PC-3 (cell line): ENCODE measurements at regions of chr20 and their contacts with region 1.

Region 1: GRCh38 chr20:32357869-32358631 is at the start of gene ASXL1:
- DNase-seq: peak; percentile 97
- ATAC-seq: peak; percentile 80
- H3K4me3 ChIP-seq: peak within 1 kb of the TSS; percentile 99
- H3K27ac ChIP-seq: peak within 1 kb of the TSS; percentile 86
- H3K4me1 ChIP-seq: peaks cover 50% of the 10 kb centered on the region
- H3K27me3 ChIP-seq: no peaks in the 10 kb centered on the region
- CTCF ChIP-seq: no peak
- total RNA-seq, gene ASXL1: 42.8 and 60.7 TPM in 2 replicates

Region 2: DNA sequence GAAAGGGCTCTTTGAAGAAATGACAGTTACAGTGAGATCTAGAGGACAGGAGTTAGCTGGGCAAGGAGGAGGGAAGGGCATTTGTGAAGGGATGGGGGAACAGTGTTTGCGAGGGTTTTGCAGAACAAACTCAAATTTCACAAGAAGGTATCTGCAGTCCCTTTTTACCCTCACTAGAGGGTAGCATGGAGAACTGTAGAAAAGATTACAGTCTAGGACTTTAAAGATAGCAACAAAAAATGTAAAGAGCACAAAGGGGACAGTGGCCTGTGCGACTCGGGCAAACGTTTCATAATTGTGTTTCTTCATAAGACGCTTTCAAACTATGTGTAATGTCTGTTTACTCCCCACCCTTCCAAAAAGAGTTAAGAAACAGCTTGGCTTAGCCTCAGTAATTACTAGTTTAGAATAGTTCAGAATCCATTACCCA is 21.1 kb before region 1 on chr20:
- CTCF ChIA-PET with region 1: no interaction called
- POLR2A ChIA-PET with region 1: no interaction called
- intact Hi-C with region 1: loop called (anchors 1 kb)
- DNase-seq: peak; percentile 66
- ATAC-seq: peak; percentile 71
- H3K4me3 ChIP-seq: no peak overlapping the region
- H3K27ac ChIP-seq: no peak overlapping the region
- H3K4me1 ChIP-seq: peaks cover 13% of the 10 kb centered on the region
- H3K27me3 ChIP-seq: no peaks in the 10 kb centered on the region
- CTCF ChIP-seq: peak; percentile 67

Region 3: DNA sequence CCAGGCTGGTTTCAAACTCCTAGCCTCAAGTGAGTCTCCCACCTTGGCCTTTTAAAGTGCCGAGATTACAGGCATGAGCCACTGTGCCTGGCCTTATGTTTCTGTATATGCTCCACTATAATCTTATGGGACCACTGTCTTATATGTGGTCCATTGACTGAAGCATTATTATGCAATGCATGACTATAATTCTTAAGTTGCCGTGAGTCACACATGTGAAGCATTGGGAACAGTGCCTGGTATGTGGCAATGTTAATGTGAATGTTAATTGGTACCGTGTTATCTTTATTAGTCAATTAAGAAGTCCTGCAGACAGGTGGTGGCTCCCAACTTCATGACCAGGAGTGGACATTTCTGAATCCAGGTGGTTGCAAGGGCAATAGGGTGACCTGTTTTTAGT is 14.6 kb before region 1 on chr20:
- CTCF ChIA-PET with region 1: interaction called, 3 read pairs
- POLR2A ChIA-PET with region 1: interaction called, 6 read pairs
- intact Hi-C with region 1: loop called (anchors 2 kb)
- DNase-seq: peak; percentile 74
- ATAC-seq: no peak
- H3K4me3 ChIP-seq: no peak overlapping the region
- H3K27ac ChIP-seq: no peak overlapping the region
- H3K4me1 ChIP-seq: peaks cover 28% of the 10 kb centered on the region
- H3K27me3 ChIP-seq: no peaks in the 10 kb centered on the region
- CTCF ChIP-seq: no peak

Region 4: DNA sequence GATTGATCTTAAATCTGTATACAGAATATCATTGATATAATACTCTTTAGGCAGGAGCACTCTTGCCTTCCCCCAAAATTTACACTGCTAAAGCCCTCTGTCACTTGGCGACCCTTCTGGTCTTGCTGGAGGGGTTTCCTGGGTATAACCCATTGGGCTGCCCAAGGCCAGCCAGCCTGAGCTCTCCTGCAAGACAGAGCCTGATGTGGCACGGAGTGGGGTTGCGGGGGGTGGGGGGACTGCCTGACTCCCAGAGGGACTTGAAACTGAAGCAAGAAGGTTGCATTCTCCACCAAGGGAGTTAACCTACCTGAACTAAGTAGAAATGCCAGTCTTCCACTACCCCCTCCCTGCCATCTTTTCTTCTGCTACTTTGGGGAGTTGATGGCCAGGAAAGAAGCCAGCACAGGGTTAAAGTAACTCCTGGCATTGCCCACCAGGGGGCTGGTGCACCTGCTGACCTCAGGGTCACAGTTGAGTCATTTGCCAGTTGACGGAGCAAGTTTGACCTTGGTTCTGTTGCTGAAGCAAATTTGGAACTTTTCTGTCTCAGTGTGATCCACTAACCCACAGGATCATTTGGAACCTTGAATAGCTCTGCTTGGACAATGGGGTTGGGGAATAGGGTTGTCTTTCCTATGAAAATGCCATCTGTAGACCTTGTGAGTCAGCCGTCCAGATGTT is 79.5 kb after region 1 on chr20:
- CTCF ChIA-PET with region 1: no interaction called
- POLR2A ChIA-PET with region 1: no interaction called
- intact Hi-C with region 1: no loop called
- DNase-seq: peak; percentile 23
- ATAC-seq: no peak
- H3K4me3 ChIP-seq: no peak overlapping the region
- H3K27ac ChIP-seq: no peak overlapping the region
- H3K4me1 ChIP-seq: no peaks in the 10 kb centered on the region
- H3K27me3 ChIP-seq: no peaks in the 10 kb centered on the region
- CTCF ChIP-seq: peak; percentile 45